GM10248 (cell line): ENCODE measurements at regions of chr20 and their contacts with region 1.

Region 1: GRCh38 chr20:40797425-40797824 is 108.4 kb upstream of the MAFB start:
- DNase-seq: no peak
- CTCF ChIP-seq: peak; percentile 18

Region 2: DNA sequence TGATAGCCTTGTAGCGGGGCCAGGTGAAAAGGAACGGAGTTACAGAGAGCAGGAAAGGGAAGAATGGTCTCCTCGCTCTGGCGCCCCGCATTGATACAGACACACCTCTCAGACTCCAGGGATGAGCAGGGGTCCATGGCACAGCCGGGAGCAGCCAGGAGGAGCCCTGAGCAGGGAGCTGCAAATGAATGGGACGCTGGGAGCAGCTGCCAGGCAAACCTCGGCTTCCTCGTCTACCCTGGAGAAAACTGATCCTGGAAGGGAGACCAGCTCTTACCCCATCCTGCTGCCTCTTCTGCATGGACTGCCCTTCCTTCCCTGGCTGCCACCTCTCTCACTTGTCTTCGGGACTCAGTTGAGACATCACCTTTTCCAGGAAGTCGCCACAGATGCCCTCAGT is 11.1 kb before region 1 on chr20:
- CTCF ChIA-PET with region 1: interaction called, 10 read pairs
- POLR2A ChIA-PET with region 1: no interaction called
- DNase-seq: no peak
- CTCF ChIP-seq: no peak

Region 3: DNA sequence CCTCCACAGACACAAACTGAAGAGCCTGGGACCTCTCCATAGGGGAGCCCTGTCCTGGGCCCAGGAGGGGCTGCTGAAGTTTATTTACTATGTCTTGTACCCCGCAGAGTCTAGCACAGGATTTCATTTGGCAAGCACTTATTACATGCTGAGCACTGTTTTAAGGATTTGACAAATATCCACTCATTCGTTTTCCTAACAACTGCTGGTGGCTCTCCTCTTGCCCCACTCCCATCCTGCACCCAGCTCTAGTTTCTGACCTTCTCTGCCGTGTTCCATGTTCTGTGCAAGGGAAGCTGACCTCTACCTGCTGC is 18.6 kb after region 1 on chr20:
- CTCF ChIA-PET with region 1: no interaction called
- POLR2A ChIA-PET with region 1: no interaction called
- DNase-seq: no peak
- CTCF ChIP-seq: no peak

Region 4: GRCh38 chr20:40880063-40880728 is 82.8 kb after region 1 on chr20:
- CTCF ChIA-PET with region 1: no interaction called
- POLR2A ChIA-PET with region 1: no interaction called
- DNase-seq: no peak
- CTCF ChIP-seq: no peak

Region 5: GRCh38 chr20:41136680-41137613 is 339.5 kb after region 1 on chr20 and contains the start of gene PLCG1:
- CTCF ChIA-PET with region 1: no interaction called
- POLR2A ChIA-PET with region 1: no interaction called
- DNase-seq: peak; percentile 95
- CTCF ChIP-seq: no peak